ENCODE measurements at regions of chr10 and their contacts with region 1.

Region 1: DNA sequence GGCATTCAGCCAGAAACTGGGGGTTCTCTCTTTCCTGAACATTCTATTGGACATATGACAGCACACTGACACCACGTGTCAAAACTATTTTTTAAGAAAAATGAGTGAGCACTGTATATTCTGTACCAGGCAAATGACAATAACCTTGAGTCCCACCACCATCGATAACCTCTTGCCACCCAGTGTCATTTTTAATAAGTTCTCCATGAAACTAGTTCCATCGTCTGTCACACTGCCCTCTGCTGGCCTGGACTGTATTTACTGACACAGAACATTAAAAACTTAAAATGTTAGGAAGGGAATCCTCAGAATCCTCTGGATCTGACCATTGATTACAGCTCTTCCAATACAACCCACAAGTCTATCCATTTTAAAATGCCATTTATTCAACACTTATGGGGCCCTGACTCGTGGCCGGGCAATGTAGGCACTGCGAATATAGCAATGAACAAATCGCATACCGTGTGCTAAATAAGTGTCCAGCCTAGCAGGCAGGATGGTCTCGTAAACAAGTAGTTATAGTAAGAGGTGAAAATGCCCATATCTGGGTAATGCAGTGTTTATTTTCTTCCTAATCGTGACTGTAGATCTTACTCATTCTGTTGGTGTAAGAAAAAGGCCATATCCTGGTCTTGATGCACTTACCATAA is 35.9 kb upstream of the CACNB2 start:
- DNase-seq: peak; percentile 65
- ATAC-seq: no peak

Region 2: GRCh38 chr10:17910125-17910789 is 194.1 kb before region 1 on chr10:
- intact Hi-C with region 1: loop called (anchors 5 kb)
- DNase-seq: no peak
- ATAC-seq: no peak